GM12878 (cell line): ENCODE measurements at regions of chr18 and their contacts with region 1.

Region 1: DNA sequence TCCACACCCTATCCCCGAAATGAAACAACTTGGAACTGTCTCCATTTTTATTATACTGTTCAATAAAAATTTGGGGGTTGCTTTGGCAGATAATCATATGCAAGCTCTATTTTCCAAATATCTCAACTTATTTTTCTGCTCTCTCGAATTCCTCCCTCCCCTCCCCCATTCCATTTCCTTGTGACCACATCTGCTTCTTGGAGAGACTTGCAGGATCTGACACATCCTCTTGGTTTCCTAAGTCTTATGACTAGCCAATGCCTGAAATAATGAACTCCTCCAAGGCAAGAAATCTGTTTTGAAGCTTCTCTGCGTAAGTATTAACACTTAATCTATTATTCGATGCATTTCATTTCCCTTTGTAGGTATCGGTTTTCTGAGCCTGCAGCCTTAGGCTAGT is 16.1 kb downstream of the TGIF1 start:
- DNase-seq: no peak
- ATAC-seq: no peak
- H3K4me3 ChIP-seq: no peak overlapping the region
- H3K27ac ChIP-seq: no peak overlapping the region
- H3K4me1 ChIP-seq: no peaks in the 10 kb centered on the region
- H3K27me3 ChIP-seq: no peaks in the 10 kb centered on the region
- CTCF ChIP-seq: no peak
- EP300 ChIP-seq: no peak
- POLR2A ChIP-seq: no peak
- RAD21 ChIP-seq: no peak

Region 2: DNA sequence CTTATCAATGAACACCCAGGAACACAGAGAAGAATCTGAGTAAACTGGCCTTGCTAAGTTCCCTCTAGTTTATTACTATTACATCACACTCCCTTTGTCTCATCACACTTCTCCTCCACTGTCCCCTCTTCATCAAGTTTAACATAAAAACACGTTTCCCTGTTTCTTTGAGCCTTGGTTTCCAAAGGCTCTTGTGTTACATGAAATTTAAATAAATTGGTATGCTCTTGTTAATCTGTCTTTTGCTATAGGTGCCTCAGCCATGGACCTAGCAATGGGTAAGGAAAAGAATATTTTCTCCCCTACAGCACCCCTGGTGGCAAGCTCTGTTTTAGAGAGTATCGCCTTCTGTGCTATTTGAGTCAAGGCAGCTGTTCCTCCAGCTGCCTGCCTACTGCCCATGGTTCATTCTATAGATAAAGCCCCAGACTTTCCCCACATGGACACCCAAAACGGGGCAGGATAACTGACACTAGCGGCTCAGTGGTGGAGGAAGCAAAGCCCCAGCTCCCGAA is 15.7 kb after region 1 on chr18:
- CTCF ChIA-PET with region 1: interaction called, 4 read pairs
- POLR2A ChIA-PET with region 1: no interaction called
- RAD21 ChIA-PET with region 1: no interaction called
- SMC1A ChIA-PET with region 1: interaction called, 10 read pairs
- in situ Hi-C with region 1: no loop called
- intact Hi-C with region 1: no loop called
- DNase-seq: no peak
- ATAC-seq: peak; percentile 89
- H3K4me3 ChIP-seq: no peak overlapping the region
- H3K27ac ChIP-seq: no peak overlapping the region
- H3K4me1 ChIP-seq: no peaks in the 10 kb centered on the region
- H3K27me3 ChIP-seq: peaks cover 0 to 2% of the 10 kb centered on the region in 2 experiments; a peak in 2 of 4 replicates
- CTCF ChIP-seq: peak; percentile 43 to 55 (median 46)
- EP300 ChIP-seq: no peak
- POLR2A ChIP-seq: no peak
- RAD21 ChIP-seq: peak; percentile 59